CD8-positive, alpha-beta memory T cell (primary cell): ENCODE measurements at regions of chr12 and their contacts with region 1.

Region 1: GRCh38 chr12:46268590-46269558 is at the start of gene SLC38A1:
- DNase-seq: peak; percentile 84 to 95 (median 90)
- H3K4me3 ChIP-seq: peak within 1 kb of the TSS; percentile 96
- H3K4me3 Mint-ChIP-seq: no peak within 1 kb of the TSS
- H3K27ac ChIP-seq: peak within 1 kb of the TSS; percentile 98
- H3K27ac Mint-ChIP-seq: no peak within 1 kb of the TSS
- H3K4me1 ChIP-seq: peaks cover 49% of the 10 kb centered on the region
- H3K4me1 Mint-ChIP-seq: peaks cover 24 to 36% (median 34%) of the 10 kb centered on the region in 3 donors
- H3K27me3 ChIP-seq: no peaks in the 10 kb centered on the region
- H3K27me3 Mint-ChIP-seq: peaks cover 0 to 11% of the 10 kb centered on the region in 2 donors
- total RNA-seq, gene SLC38A1: 233 to 242 TPM

Region 2: GRCh38 chr12:45990468-45991283 is 278.2 kb before region 1 on chr12 and contains the start of gene SCAF11:
- CTCF ChIA-PET with region 1: interaction called, 8 read pairs
- POLR2A ChIA-PET with region 1: interaction called, 33 read pairs
- DNase-seq: peak; percentile 100
- H3K4me3 ChIP-seq: peak within 1 kb of the TSS; percentile 80
- H3K4me3 Mint-ChIP-seq: peak within 1 kb of the TSS; percentile 91 to 99 (median 94)
- H3K27ac ChIP-seq: peak within 1 kb of the TSS; percentile 98
- H3K27ac Mint-ChIP-seq: peak within 1 kb of the TSS; percentile 93 to 100 (median 99)
- H3K4me1 ChIP-seq: peaks cover 42% of the 10 kb centered on the region
- H3K4me1 Mint-ChIP-seq: peaks cover 51 to 56% (median 51%) of the 10 kb centered on the region in 3 donors
- H3K27me3 ChIP-seq: no peaks in the 10 kb centered on the region
- H3K27me3 Mint-ChIP-seq: peaks cover 0 to 10% of the 10 kb centered on the region in 2 donors
- total RNA-seq, gene SCAF11: 114 to 119 TPM

Region 3: DNA sequence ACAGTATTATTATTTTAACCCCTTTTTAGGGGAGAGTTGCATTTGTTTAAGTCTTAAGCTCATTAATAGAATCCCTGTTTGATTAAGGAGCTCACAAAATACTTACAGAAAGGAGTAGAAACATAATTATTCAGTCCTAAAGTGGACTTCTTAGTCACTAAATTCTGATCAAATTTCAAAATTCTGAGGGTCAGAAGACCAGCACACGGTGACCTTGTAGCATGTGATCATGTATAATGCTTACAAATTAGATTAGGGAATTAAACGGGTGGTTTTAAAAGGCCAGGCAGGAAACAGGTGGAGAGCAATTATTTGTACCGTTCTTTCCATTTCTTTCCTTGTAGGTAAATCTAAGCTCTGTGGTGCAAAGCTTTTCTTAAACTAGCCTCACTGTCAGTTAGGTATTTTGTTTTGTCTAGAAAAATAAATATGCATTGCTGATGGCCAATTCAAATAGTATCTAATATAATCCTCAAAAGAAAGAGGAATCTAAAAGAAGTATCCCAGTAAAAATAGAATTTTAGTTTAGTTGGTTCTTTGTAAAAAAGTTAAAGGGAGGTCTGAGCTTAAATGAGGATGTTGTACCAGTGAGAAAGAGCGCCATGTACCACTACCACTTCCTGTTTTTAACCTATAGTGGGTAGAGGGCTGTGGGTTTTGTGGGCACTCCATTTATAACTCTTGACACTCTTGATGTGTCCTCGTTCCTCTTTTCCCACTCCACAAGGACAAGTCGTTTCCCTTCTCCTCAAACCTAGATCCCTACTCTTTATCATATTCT is 51.1 kb before region 1 on chr12:
- CTCF ChIA-PET with region 1: interaction called, 22 read pairs
- POLR2A ChIA-PET with region 1: interaction called, 108 read pairs
- DNase-seq: peak; percentile 33 to 88 (median 77)
- H3K4me3 ChIP-seq: peak overlapping the region; percentile 42
- H3K4me3 Mint-ChIP-seq: peak overlapping the region; percentile 71 to 88 (median 82)
- H3K27ac ChIP-seq: peak overlapping the region; percentile 43
- H3K27ac Mint-ChIP-seq: peak overlapping the region; percentile 87 to 100 (median 98)
- H3K4me1 ChIP-seq: peaks cover 95% of the 10 kb centered on the region
- H3K4me1 Mint-ChIP-seq: peaks cover 97 to 100% (median 98%) of the 10 kb centered on the region in 3 donors
- H3K27me3 ChIP-seq: no peaks in the 10 kb centered on the region
- H3K27me3 Mint-ChIP-seq: peaks cover 0 to 4% of the 10 kb centered on the region in 2 donors

Region 4: DNA sequence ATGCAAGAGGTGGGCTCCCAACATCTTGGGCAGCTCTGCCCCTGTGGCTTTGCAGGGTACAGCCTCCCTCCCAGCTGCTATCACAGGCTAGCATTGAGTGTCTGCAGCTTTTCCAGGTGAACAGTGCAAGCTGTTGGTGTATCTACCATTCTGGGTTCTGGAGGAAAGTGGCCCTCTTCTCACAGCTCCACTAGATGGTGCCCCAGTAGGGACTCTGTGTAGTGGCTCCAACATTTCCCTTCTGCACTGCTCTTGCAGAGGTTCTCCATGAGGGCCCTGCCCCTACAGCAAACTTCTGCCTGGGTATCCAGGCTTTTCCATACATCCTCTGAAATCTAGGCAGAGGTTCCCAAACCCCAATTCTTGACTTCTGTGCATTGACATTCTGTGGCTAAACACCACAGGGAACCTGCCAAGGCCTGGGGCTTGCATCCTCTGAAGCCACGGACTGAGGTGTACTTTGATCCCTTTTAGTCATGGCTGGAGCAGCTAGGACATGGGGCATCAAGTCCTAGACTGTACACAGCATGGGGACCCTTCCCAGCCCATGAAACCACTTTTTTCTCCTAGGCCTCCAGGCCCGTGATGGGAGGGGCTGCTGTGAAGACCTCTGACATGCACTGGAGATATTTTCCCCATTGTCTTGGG is 24.0 kb after region 1 on chr12:
- CTCF ChIA-PET with region 1: no interaction called
- POLR2A ChIA-PET with region 1: no interaction called
- DNase-seq: no peak
- H3K4me3 ChIP-seq: no peak overlapping the region
- H3K4me3 Mint-ChIP-seq: no peak overlapping the region
- H3K27ac ChIP-seq: no peak overlapping the region
- H3K27ac Mint-ChIP-seq: no peak overlapping the region
- H3K4me1 ChIP-seq: no peaks in the 10 kb centered on the region
- H3K4me1 Mint-ChIP-seq: no peaks in the 10 kb centered on the region
- H3K27me3 ChIP-seq: no peaks in the 10 kb centered on the region
- H3K27me3 Mint-ChIP-seq: peaks cover 1 to 3% of the 10 kb centered on the region in 2 donors

Region 5: DNA sequence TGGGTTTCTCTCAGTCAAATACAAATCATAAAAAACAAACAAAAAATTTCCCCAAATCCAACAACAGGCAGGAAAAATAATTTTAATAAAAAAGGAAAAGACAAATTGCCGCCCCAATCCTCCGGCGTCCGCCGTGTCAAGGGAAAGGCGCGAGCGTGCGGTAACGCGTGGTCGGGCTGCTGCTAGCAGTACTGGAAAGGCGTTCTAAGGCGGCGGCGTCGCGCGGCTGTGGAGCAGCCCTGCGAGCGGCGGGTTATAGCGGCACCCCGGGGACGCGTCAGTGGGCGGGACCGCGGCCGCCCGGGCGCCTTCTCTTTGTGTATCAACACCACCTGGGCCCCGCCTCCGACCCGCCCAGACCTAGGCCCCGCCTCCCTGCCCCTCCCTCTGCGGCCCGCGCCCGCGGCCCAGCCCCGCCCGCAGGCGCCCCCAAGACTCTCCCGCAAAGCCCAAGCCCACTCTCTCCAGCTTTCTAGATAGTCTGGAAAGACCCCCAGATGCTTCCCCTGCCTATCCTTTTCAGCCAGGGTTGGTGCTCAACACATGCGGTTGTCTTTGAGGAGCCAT is 103.8 kb after region 1 on chr12 and contains the start of gene SLC38A2:
- CTCF ChIA-PET with region 1: interaction called, 3 read pairs
- POLR2A ChIA-PET with region 1: interaction called, 20 read pairs
- DNase-seq: peak; percentile 95 to 98 (median 96)
- H3K4me3 ChIP-seq: peak within 1 kb of the TSS; percentile 90
- H3K4me3 Mint-ChIP-seq: peak within 1 kb of the TSS; percentile 97 to 100 (median 99)
- H3K27ac ChIP-seq: peak within 1 kb of the TSS; percentile 92
- H3K27ac Mint-ChIP-seq: peak within 1 kb of the TSS; percentile 95 to 100 (median 99)
- H3K4me1 ChIP-seq: peaks cover 45% of the 10 kb centered on the region
- H3K4me1 Mint-ChIP-seq: peaks cover 50 to 53% (median 52%) of the 10 kb centered on the region in 3 donors
- H3K27me3 ChIP-seq: no peaks in the 10 kb centered on the region
- H3K27me3 Mint-ChIP-seq: peaks cover 0 to 16% of the 10 kb centered on the region in 2 donors
- total RNA-seq, gene SLC38A2: 198 to 202 TPM